Kidney (tissue), 22 donors: ENCODE measurements at regions of chr10 and their contacts with region 1.

Region 1: GRCh38 chr10:123994417-123995081 is 98.8 kb downstream of the CHST15 start:
- DNase-seq: peak; percentile 91 to 95 (median 92)
- H3K4me3 ChIP-seq: no peak overlapping the region
- H3K27ac ChIP-seq: no peak overlapping the region
- H3K4me1 ChIP-seq: peaks cover 0 to 11% (median 0%) of the 10 kb centered on the region in 3 donors
- H3K27me3 ChIP-seq: peaks cover 15% of the 10 kb centered on the region
- CTCF ChIP-seq: peak; percentile 97

Region 2: DNA sequence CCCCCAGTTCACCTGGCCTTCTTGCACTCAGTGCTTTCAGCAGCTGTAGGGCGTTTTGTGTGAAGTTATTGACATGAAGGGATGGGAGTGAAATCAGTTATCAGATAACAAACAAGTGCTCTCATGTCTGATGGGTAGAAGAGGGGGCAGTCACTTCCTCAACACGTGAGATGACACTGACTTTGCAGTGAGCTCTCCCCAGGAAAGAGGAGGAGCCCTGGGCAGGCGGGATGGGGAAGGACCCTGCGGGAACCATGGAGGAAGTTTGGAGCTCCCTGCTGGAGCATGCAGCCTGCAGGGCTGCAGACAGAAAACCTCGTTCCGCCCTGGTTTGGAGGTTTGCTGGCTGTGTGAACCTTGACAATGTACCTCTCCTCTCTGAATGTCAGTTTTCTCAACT is 289.7 kb before region 1 on chr10:
- intact Hi-C with region 1: no loop called
- DNase-seq: no peak
- H3K4me3 ChIP-seq: no peak overlapping the region
- H3K27ac ChIP-seq: no peak overlapping the region
- H3K4me1 ChIP-seq: no peaks in the 10 kb centered on the region
- H3K27me3 ChIP-seq: no peaks in the 10 kb centered on the region
- CTCF ChIP-seq: no peak

Region 3: GRCh38 chr10:123858077-123858681 is 136.4 kb before region 1 on chr10:
- intact Hi-C with region 1: no loop called
- DNase-seq: peak in 1 of 5 donors; percentile 20
- H3K4me3 ChIP-seq: no peak overlapping the region
- H3K27ac ChIP-seq: no peak overlapping the region
- H3K4me1 ChIP-seq: peaks cover 0 to 3% (median 2%) of the 10 kb centered on the region in 3 donors
- H3K27me3 ChIP-seq: no peaks in the 10 kb centered on the region
- CTCF ChIP-seq: no peak

Region 4: GRCh38 chr10:124145109-124145870 is 150.7 kb after region 1 on chr10:
- intact Hi-C with region 1: no loop called
- DNase-seq: peak in 3 of 5 donors; percentile 65 to 86 (median 69)
- H3K4me3 ChIP-seq: no peak overlapping the region
- H3K27ac ChIP-seq: peak overlapping the region in 1 of 2 donors; percentile 70
- H3K4me1 ChIP-seq: peaks cover 3 to 9% (median 4%) of the 10 kb centered on the region in 3 donors
- H3K27me3 ChIP-seq: no peaks in the 10 kb centered on the region
- CTCF ChIP-seq: no peak

Region 5: DNA sequence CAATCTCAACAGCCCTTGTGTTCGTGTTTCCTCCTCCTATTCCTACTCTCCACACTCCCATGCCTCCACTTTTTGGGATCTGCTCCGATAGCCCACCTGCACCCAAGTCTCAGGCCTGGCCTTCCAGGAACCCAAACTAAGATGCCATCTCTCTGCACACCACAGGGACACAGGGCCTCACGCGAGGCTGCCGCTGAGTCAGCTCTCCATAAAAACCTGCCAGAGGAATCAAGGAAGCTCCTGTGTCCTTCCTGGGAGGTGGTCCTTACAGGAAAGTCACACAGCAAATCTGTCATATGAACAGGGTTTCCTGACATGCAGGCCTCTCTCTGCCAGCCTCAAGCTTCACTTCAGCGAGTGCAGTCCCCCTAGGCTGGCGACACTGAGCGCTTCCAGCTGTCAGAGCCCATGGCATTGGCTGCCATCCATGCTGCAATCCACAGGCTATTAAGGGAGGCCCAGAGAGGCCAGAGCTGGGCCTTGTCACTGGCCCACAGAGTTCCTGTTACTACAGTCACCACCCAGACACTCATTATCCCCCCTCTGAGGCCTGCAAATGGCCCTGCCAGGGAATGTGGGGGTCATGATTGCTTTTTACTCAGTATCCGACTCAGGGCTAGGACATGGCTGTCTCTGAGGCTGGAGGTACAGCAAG is 272.8 kb after region 1 on chr10:
- intact Hi-C with region 1: loop called (anchors 10 kb)
- DNase-seq: no peak
- H3K4me3 ChIP-seq: no peak overlapping the region
- H3K27ac ChIP-seq: no peak overlapping the region
- H3K4me1 ChIP-seq: no peaks in the 10 kb centered on the region
- H3K27me3 ChIP-seq: no peaks in the 10 kb centered on the region
- CTCF ChIP-seq: no peak

Region 6: GRCh38 chr10:124388823-124389612 is 394.5 kb after region 1 on chr10:
- intact Hi-C with region 1: loop called (anchors 5 kb)
- DNase-seq: peak; percentile 91 to 96 (median 95)
- H3K4me3 ChIP-seq: peak overlapping the region in 2 of 3 donors; percentile 6 to 59
- H3K27ac ChIP-seq: no peak overlapping the region
- H3K4me1 ChIP-seq: peaks cover 0 to 5% (median 0%) of the 10 kb centered on the region in 3 donors
- H3K27me3 ChIP-seq: no peaks in the 10 kb centered on the region
- CTCF ChIP-seq: peak; percentile 98